Mammary epithelial cell (primary cell): ENCODE measurements at regions of chr4 and their contacts with region 1.

Region 1: DNA sequence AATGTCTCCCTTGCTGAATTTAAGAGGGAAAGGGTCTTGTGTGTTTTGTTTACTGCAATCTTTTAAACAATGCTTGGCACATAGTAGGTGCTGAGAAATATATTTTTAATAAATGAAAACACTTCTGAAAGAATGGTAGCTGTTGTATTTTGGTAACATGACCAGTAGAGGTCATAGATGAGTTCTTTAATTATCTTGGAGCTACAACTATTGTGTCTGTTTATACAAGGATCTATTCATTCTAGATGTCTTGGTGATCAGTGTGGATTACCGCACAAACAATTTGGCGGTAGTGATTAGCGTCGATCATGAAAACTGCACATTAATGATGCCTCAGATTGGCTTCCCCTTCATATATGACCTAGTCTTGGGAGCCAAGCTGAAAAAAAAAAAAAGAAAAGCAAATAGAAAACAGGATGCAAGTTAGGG is 21.4 kb upstream of the SCRG1 start:
- DNase-seq: no peak
- H3K4me3 ChIP-seq: no peak overlapping the region
- H3K27ac ChIP-seq: no peak overlapping the region
- H3K4me1 ChIP-seq: peaks cover 4% of the 10 kb centered on the region
- H3K27me3 ChIP-seq: no peaks in the 10 kb centered on the region
- CTCF ChIP-seq: peak; percentile 37 to 43

Region 2: DNA sequence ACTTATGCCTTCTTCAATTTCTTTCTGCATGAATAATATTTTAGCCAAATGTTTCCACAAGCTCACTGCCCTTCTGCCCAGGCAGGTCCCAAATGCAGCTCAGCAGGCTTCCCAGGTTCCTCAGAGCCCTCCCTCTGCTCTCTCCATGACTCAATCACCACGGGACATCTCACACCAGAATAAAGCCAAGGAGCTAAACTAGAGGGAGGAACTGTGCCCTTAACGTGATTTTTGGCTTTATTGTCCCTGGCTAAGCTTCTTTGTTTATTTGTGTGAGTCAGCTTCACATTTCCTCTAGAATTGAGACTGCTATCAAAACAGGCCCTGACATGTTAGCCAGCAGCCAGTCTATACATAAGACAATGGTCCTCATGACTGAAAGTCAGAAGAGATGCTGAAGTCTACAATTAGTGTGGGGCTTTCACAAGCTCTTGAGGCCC is 438.2 kb before region 1 on chr4:
- CTCF ChIA-PET with region 1: no interaction called
- dilution Hi-C with region 1: no loop called
- in situ Hi-C with region 1: no loop called
- intact Hi-C with region 1: no loop called
- DNase-seq: peak; percentile 99
- H3K4me3 ChIP-seq: no peak overlapping the region
- H3K27ac ChIP-seq: peak overlapping the region; percentile 36
- H3K4me1 ChIP-seq: peaks cover 28% of the 10 kb centered on the region
- H3K27me3 ChIP-seq: no peaks in the 10 kb centered on the region
- CTCF ChIP-seq: no peak

Region 3: DNA sequence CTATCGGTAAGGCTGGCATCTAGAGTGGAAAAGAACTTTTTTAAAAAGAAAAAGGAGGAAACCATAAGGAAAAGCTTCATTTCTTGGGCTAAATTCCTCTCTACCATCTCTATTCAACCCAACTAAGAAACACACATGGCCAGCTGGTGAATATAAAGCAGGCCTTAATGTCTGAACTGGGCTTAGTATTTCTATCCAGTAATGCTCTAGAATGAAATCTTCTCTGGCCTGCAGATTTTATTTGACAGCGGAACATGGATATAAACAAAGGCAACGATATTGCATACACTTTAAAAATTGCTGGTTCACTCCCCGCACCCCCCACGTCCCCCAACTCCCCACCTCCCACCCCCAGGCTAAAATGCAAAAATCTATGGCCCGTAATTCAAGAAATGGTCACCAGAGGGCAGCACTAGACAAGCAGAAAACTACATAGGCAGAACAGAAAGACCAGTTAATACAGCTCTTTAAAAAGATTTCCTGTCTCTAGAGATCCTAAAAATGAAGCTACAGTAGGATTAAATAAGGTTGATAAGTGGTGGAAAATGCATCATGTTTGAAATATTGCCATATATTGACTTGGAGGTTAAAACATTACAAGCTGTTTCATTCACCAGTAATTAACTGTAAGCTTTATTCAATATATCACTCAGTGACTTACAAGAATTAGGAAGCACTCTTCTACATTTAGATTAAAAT is 407.0 kb before region 1 on chr4:
- CTCF ChIA-PET with region 1: no interaction called
- dilution Hi-C with region 1: no loop called
- in situ Hi-C with region 1: loop called (anchors 10 to 25 kb)
- intact Hi-C with region 1: loop called (anchors 1 kb)
- DNase-seq: no peak
- H3K4me3 ChIP-seq: no peak overlapping the region
- H3K27ac ChIP-seq: no peak overlapping the region
- H3K4me1 ChIP-seq: no peaks in the 10 kb centered on the region
- H3K27me3 ChIP-seq: no peaks in the 10 kb centered on the region
- CTCF ChIP-seq: peak; percentile 41 to 65

Region 4: DNA sequence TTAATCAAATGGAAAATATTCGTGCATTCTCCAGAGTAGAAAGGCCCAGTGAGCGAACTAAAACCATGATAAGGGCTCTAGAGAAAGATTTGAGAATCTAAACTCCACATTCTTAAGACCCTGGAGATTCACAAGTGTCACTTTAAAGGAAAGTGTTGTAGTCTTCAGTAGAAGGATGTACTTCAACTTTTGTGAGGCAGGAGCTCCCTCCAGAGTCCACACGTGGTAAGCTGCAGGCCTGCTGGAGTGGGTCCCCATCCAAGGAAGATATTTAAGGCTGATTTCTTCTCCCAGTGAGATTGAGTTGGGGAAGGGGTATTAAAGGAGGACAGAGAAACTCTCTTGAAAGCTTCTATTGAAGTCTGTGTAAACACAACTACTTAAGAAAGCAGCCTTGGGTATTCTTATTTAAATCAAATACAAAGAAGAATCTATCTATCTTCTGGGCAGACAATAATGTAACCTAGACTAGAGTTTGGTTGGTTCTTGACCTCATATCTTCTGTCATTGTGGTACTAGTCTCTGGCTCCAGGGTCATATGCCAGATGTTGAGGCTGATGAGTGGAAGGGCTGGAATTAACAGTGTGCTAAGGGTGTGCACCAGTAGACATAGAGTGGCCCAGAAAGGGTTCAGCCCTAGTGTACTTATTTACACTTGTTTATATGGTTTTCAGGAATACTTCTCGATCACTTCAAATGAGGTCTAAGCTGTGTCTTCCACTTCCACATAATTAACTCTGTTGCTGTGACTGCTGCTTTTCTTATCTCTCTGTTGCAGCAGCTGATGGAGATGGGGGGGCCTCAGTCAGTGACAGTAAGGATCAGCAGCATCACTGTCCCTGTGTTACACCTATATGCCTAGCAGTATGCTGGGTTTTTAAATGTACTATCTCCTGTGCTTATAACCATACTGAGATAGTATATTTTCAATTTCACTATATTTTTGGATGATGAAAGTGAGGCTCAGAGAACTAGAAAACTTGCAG is 162.3 kb before region 1 on chr4:
- CTCF ChIA-PET with region 1: no interaction called
- dilution Hi-C with region 1: no loop called
- in situ Hi-C with region 1: no loop called
- intact Hi-C with region 1: loop called (anchors 1 kb)
- DNase-seq: peak; percentile 38
- H3K4me3 ChIP-seq: no peak overlapping the region
- H3K27ac ChIP-seq: no peak overlapping the region
- H3K4me1 ChIP-seq: peaks cover 2% of the 10 kb centered on the region
- H3K27me3 ChIP-seq: no peaks in the 10 kb centered on the region
- CTCF ChIP-seq: peak; percentile 84 to 91

Region 5: DNA sequence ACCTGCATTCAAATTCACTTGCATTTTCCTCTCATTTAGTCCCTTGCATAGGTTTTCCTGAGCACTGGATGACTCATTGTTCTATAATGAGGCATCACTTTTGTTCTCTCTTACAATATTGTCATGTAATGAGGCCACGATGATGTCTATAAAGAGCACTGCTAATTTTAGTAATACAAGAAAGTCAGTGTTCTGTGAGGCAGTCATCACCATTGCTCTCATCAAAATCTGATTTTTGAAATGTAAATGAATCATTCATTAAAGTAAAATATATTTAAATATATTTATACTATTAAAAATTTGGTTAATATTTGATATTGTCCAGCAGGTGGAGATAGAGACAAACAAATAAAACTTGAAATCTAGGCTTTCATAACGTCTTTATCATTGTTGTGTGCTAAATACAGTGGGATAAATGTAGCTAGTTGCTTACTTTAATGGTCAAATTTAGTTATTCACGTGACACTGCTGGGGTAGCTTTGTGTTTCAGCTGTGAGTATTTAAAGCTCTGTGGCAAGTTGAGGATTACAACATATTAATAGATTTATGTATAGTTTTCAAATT is 101.6 kb before region 1 on chr4:
- CTCF ChIA-PET with region 1: interaction called, 4 read pairs
- dilution Hi-C with region 1: loop called (anchors 5 kb)
- in situ Hi-C with region 1: no loop called
- intact Hi-C with region 1: loop called (anchors 1 kb)
- DNase-seq: peak; percentile 56
- H3K4me3 ChIP-seq: no peak overlapping the region
- H3K27ac ChIP-seq: no peak overlapping the region
- H3K4me1 ChIP-seq: peaks cover 18% of the 10 kb centered on the region
- H3K27me3 ChIP-seq: no peaks in the 10 kb centered on the region
- CTCF ChIP-seq: peak; percentile 2 to 27

Region 6: GRCh38 chr4:173370477-173371291 is 49.7 kb before region 1 on chr4 and contains the start of gene SAP30:
- CTCF ChIA-PET with region 1: interaction called, 8 read pairs
- dilution Hi-C with region 1: no loop called
- in situ Hi-C with region 1: no loop called
- intact Hi-C with region 1: loop called (anchors 1 kb)
- DNase-seq: peak; percentile 97
- H3K4me3 ChIP-seq: peak within 1 kb of the TSS; percentile 85 to 100 (median 99)
- H3K27ac ChIP-seq: peak within 1 kb of the TSS; percentile 97
- H3K4me1 ChIP-seq: peaks cover 16% of the 10 kb centered on the region
- H3K27me3 ChIP-seq: no peaks in the 10 kb centered on the region
- CTCF ChIP-seq: no peak
- total RNA-seq, gene SAP30: 7.0 to 13.3 TPM

Region 7: DNA sequence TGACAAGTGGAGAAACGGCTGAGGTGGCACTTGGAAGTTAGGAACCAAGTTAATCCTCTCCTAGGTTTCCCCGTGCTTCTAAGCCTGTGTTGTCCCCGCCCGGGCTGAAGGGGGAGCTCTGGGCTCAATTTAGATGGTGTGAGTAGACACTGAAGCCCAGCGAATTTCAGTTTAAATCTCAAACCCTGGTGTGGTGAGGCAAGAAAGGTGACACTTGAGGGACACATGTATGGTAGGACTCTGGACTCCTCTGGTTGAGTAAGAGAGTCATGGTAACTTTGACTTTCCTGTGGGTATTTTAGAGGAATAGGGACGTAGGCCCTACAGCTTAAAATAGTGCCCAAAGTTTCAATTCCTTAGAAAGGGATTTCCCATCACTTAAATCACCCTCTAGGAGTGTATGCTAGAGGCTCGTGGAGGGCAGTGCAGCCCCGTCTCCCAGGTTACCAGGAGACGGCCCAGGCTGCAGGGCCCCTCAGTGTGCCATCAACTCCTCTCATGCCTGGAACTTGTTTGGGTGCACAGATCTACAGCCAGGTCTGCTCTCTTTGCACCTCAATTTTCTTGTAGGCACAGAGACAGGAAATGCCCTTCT is 85.7 kb after region 1 on chr4:
- CTCF ChIA-PET with region 1: no interaction called
- dilution Hi-C with region 1: no loop called
- in situ Hi-C with region 1: no loop called
- intact Hi-C with region 1: no loop called
- DNase-seq: no peak
- H3K4me3 ChIP-seq: no peak overlapping the region
- H3K27ac ChIP-seq: no peak overlapping the region
- H3K4me1 ChIP-seq: no peaks in the 10 kb centered on the region
- H3K27me3 ChIP-seq: peaks cover 21% of the 10 kb centered on the region
- CTCF ChIP-seq: peak; percentile 68 to 84

Region 8: DNA sequence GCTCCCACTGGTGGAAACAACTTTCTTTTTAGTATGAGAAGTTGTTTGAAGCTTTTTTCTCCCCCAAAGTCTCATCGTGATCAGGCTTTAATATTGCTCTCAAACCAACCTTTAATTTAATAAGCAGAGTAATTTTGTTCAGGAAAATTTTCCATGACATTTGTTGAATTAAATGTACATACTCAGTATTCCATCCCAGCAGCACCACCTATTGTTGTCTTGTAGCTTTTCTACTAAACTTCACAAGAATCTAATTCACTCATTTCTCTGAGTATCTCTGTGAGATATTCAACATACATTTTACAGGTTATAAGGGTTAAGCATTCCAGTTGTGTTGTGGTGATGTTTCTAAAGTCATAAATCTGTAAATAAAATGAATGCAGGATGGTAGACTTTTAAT is 328.0 kb after region 1 on chr4:
- CTCF ChIA-PET with region 1: no interaction called
- dilution Hi-C with region 1: no loop called
- in situ Hi-C with region 1: no loop called
- intact Hi-C with region 1: loop called (anchors 2 kb)
- DNase-seq: no peak
- H3K4me3 ChIP-seq: no peak overlapping the region
- H3K27ac ChIP-seq: no peak overlapping the region
- H3K4me1 ChIP-seq: no peaks in the 10 kb centered on the region
- H3K27me3 ChIP-seq: no peaks in the 10 kb centered on the region
- CTCF ChIP-seq: peak in 1 of 2 donors; percentile 36